ENCODE measurements at regions of chr16 and their contacts with region 1.

Region 1: DNA sequence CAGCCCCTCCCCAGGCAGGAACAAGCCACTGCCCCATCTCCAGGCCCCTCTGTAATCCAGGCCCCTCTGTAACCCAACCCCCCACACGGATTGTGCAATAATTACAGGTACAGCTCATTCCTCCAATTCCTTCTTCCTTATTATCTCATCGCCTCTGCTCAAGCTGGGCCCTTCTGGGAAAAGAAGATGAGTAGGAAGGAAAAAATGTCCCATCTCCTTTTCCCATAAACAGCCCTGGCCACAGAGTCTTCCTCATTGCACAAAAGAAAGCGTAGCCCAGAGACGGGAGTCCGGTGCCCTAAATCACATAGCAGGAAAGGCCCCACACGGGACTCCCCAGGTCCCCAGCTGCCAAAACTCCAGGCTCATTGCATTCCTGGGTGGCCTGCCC is 3.6 kb upstream of the LITAFD start:
- DNase-seq: peak; percentile 51
- H3K4me3 ChIP-seq: no peak overlapping the region
- CTCF ChIP-seq: no peak

Region 2: GRCh38 chr16:8567750-8568617 is 310.5 kb before region 1 on chr16:
- CTCF ChIA-PET with region 1: interaction called, 36 read pairs
- POLR2A ChIA-PET with region 1: no interaction called
- DNase-seq: peak; percentile 36
- H3K4me3 ChIP-seq: no peak overlapping the region
- CTCF ChIP-seq: peak; percentile 87

Region 3: DNA sequence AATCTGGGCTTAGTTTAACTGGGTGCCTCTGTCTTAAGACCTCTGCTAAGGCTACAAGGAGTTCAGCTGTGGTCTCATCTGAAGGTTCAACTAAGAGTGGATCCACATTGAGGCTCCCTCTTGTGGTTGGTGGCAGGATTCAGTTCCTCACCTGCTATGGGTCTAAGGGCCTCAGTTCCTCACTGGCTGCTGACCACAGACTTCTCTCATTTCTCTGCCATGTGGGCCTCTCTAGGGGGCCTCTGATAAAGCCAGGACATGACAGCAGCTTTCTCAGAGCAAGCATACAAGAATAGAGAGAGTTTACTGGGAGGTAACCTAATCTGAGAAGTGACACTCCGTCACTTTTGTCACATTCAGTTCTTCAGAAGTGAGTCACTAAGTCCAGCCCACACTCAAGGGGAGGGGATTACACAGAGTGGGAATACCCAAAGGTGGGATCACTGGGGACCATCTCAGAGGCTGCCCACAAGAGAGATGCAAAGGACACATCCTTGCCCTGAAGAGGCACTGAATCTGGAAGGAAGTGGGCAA is 223.3 kb before region 1 on chr16:
- CTCF ChIA-PET with region 1: interaction called, 132 read pairs
- POLR2A ChIA-PET with region 1: no interaction called
- DNase-seq: no peak
- H3K4me3 ChIP-seq: no peak overlapping the region
- CTCF ChIP-seq: peak; percentile 57

Region 4: DNA sequence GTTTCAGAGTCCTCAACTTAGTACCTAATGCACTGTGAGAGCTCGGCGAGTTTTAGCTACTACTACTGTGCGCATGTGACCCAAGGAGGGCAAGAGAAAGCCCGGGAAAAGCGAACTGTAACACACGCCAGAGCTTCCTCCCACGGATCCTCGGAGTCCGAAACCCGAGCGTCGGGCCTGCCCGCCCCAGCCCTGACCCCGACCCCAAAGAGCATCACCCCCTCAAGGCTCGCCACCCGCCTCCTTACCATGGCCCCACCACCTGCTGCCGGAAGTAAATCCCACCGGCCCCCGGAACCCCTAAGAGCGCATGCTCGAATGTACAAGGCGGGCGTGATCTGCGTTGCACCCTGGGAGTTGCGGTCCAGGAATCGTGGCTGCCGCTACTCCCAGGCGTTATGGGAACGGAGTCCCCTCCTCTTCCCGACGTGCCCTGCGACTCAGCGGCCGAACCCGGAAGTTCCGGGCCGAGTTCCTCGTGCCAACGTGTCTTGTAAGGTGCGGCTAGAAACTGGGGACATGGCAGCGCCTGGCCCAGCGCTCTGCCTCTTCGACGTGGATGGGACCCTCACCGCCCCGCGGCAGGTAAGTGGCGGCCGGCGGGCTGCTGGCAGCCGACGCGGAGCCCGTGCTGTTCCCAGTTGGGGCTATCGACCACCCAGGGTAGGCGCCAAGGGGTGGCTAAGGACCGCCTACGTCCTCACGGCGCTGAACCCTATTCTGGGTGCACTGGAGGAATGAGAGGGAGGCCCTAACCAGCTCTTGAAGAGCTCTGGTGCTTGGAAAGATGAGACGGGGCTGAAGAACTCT is 80.9 kb before region 1 on chr16 and contains the starts of genes PMM2 and TMEM186:
- CTCF ChIA-PET with region 1: interaction called, 17 read pairs
- POLR2A ChIA-PET with region 1: no interaction called
- DNase-seq: peak; percentile 73
- H3K4me3 ChIP-seq: peak within 1 kb of the TSS; percentile 98
- CTCF ChIP-seq: no peak

Region 5: DNA sequence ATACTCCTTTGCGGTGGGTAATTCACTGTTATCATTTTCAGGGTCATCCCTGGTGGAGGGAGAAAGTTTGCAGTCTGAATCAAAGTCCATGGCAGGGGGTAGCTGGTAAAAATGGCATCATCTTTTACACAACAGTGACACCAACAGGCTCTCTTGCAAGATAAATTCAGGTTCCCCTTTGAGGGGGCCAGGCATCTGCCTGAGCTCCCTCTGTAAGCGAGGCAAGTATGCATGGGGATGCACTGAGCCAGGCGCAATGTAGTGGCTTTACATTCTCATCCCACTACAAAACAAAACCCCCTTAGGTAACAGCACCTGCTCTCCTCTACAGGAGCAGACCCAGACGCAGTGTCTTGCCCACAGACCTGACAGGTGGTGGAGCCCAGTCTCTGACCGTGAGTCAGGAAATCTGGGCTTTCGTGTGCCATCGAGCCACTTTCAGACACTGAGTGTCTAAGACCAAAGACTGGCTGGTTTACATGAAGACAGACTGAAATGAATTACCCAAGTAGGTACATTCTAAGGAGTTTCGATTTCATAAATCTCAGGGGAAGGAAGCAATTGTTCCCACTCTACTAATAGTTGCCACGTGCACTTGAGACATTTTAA is 21.3 kb after region 1 on chr16:
- CTCF ChIA-PET with region 1: interaction called, 30 read pairs
- POLR2A ChIA-PET with region 1: no interaction called
- DNase-seq: no peak
- H3K4me3 ChIP-seq: no peak overlapping the region
- CTCF ChIP-seq: no peak